ENCODE measurements at regions of chr2 and their contacts with region 1.

Region 1: DNA sequence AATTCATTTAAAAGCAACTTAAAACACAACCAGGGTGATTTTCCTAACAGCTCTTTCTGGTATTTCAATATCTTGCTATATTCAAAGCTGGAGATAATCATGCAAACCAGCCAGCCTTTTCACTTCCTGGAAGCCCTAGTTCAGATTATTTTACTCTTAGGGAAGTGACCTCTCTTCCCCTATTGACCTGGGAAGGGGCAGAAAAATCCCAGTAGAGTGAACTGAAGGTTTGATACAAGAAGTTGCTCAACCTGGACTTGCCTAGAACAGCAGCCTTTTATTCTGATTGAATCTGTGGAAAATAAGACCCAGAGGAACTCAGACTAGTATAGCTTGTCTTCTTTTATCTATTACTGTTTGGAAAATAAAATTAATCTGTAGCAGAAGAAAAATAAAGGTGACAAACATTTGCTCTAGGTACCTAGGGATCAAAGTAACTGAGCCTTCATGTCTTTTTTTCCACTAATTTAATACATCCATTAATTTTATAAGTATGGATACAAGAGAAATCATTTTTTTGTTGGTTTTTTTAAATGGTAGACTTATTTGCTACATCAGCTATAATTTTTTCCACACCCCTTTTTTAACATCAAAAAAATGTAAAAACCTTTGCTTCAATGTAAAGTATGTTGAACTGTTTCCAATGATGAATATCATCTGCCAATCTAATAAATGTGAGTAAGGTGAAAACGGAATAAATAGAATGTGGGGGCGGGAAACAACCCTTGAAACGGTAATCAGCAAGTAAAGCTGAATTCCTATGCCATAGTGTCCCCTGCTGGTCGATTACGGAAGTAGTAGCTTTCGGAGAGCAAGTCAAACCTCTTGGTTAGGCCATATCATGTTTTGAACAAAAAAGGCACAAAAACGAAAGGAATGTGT is 629.9 kb downstream of the NRXN1 start:
- DNase-seq: peak; percentile 63
- H3K4me3 Mint-ChIP-seq: no peak overlapping the region
- H3K27ac Mint-ChIP-seq: no peak overlapping the region
- H3K4me1 Mint-ChIP-seq: no peaks in the 10 kb centered on the region
- H3K27me3 Mint-ChIP-seq: no peaks in the 10 kb centered on the region
- CTCF ChIP-seq: peak; percentile 51

Region 2: GRCh38 chr2:48946449-48947048 is 1455.5 kb before region 1 on chr2:
- CTCF ChIA-PET with region 1: interaction called, 10 read pairs
- intact Hi-C with region 1: loop called (anchors 1 kb)
- DNase-seq: peak; percentile 47
- H3K4me3 Mint-ChIP-seq: no peak overlapping the region
- H3K27ac Mint-ChIP-seq: no peak overlapping the region
- H3K4me1 Mint-ChIP-seq: no peaks in the 10 kb centered on the region
- H3K27me3 Mint-ChIP-seq: peaks cover 15% of the 10 kb centered on the region
- CTCF ChIP-seq: peak; percentile 80

Region 3: DNA sequence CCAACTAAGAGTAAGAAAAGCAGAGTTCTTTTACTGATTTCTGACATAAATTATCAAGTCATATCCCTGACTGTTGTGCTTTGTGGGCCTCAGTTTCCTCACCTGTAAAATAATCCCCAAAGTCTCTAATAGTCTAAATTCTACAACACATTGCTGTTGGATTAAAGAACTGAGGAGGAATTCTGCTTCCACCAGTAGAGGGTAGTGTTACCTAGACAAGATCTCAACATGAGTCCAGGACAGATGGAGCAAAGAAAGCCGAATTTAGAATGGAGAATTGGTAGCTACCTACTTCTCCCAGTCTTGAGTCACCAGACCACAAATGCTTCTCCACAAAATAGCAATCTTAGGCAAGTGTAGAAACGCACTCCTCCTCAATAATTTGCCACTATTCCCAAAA is 785.2 kb before region 1 on chr2:
- CTCF ChIA-PET with region 1: interaction called, 3 read pairs
- intact Hi-C with region 1: loop called (anchors 1 kb)
- DNase-seq: peak; percentile 4
- H3K4me3 Mint-ChIP-seq: no peak overlapping the region
- H3K27ac Mint-ChIP-seq: no peak overlapping the region
- H3K4me1 Mint-ChIP-seq: no peaks in the 10 kb centered on the region
- H3K27me3 Mint-ChIP-seq: peaks cover 7% of the 10 kb centered on the region
- CTCF ChIP-seq: no peak

Region 4: GRCh38 chr2:49770919-49771318 is 631.1 kb before region 1 on chr2:
- CTCF ChIA-PET with region 1: interaction called, 4 read pairs
- intact Hi-C with region 1: loop called (anchors 2 kb)
- DNase-seq: peak; percentile 27
- H3K4me3 Mint-ChIP-seq: no peak overlapping the region
- H3K27ac Mint-ChIP-seq: no peak overlapping the region
- H3K4me1 Mint-ChIP-seq: no peaks in the 10 kb centered on the region
- H3K27me3 Mint-ChIP-seq: no peaks in the 10 kb centered on the region
- CTCF ChIP-seq: no peak

Region 5: DNA sequence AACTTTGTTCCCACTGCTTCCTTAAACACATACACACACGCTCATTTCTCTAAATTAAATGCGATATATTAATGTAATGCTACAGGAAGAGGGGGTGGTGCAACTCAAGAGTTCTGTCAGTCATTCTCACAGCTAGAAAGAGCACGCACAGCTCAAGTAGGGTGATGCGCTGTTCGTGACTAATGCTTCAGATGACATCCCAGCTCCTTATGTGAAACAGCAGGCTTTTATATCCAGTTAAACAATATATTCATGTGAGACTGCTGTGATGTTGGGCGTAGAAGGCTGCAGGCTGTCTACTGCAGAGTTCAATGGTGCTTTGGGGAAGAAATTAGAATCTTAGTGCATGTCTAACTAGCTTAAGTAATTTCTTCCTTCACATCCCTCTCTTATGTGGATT is 335.1 kb before region 1 on chr2:
- CTCF ChIA-PET with region 1: no interaction called
- intact Hi-C with region 1: no loop called
- DNase-seq: no peak
- H3K4me3 Mint-ChIP-seq: no peak overlapping the region
- H3K27ac Mint-ChIP-seq: no peak overlapping the region
- H3K4me1 Mint-ChIP-seq: no peaks in the 10 kb centered on the region
- H3K27me3 Mint-ChIP-seq: no peaks in the 10 kb centered on the region
- CTCF ChIP-seq: no peak

Measured in Calu3 (cell line).